ENCODE measurements at regions of chr11 and their contacts with region 1.

Region 1: DNA sequence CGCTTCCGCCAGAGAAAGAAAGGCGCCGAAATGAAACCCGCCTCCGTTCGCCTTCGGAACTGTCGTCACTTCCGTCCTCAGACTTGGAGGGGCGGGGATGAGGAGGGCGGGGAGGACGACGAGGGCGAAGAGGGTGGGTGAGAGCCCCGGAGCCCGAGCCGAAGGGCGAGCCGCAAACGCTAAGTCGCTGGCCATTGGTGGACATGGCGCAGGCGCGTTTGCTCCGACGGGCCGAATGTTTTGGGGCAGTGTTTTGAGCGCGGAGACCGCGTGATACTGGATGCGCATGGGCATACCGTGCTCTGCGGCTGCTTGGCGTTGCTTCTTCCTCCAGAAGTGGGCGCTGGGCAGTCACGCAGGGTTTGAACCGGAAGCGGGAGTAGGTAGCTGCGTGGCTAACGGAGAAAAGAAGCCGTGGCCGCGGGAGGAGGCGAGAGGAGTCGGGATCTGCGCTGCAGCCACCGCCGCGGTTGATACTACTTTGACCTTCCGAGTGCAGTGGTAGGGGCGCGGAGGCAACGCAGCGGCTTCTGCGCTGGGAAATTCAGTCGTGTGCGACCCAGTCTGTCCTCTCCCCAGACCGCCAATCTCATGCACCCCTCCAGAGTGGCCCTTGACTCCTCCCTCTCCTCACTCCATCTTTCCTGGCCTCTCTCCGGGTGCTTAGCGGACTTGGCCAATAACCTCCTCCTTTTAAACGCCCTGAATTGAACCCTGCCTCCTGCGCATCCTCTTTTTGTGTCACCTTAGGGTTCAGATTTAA is at the start of gene ATM:
- DNase-seq: peak; percentile 98 to 99 (median 99)
- H3K4me3 ChIP-seq: peak within 1 kb of the TSS; percentile 97 to 99
- H3K4me3 Mint-ChIP-seq: no peak within 1 kb of the TSS
- H3K27ac ChIP-seq: peak within 1 kb of the TSS; percentile 97
- H3K27ac Mint-ChIP-seq: no peak within 1 kb of the TSS
- H3K4me1 ChIP-seq: peaks cover 57% of the 10 kb centered on the region
- H3K4me1 Mint-ChIP-seq: peaks cover 33 to 57% (median 47%) of the 10 kb centered on the region in 4 donors
- H3K27me3 ChIP-seq: no peaks in the 10 kb centered on the region
- H3K27me3 Mint-ChIP-seq: no peaks in the 10 kb centered on the region
- total RNA-seq, gene ATM: 525 to 555 TPM

Region 2: DNA sequence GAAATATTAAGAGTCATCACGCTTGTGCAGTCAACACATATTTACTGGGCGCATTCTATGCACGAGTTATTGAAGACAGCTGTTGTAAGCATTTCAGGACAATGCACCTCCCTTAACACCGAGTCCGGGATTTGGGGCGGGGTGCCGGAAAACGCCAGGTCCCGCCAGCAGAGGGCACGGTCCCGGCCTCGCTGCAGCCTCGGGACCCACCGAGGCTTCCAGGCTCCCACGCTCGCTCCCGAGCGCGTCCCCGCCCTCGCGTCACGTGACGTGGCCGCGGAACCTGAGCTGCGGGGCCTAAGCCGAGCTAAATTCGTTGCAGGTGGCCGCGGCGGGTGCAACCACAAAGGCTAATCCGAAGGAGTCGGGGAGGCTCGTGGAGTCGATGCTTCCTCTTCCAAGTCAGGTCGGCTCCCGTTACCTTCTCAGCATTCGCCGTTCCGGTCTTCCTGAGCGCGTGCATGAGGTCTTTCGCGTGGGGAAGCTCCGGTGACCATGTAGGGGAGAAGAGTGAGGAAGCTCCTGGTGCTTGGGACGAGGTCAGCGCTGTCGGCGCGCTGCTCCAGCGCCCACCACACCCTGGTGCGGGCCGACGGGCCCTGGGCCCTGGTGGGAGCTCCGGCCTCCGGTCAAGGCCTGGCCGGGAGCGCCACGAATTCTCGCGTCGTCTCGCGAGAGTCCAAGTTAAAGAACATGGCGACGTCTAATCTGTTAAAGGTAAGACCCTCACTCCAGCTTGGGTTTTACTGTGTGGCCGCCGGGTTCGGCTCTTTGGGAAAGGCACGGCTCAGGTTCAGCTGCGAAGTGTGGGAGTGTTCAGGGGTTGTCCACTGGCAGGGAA is 214.0 kb before region 1 on chr11 and contains the start of gene CUL5:
- CTCF ChIA-PET with region 1: no interaction called
- POLR2A ChIA-PET with region 1: interaction called, 3 read pairs
- intact Hi-C with region 1: loop called (anchors 5 kb)
- DNase-seq: peak; percentile 87 to 91 (median 89)
- H3K4me3 ChIP-seq: peak within 1 kb of the TSS; percentile 98 to 100
- H3K4me3 Mint-ChIP-seq: peak within 1 kb of the TSS; percentile 94 to 100 (median 99)
- H3K27ac ChIP-seq: peak within 1 kb of the TSS; percentile 96
- H3K27ac Mint-ChIP-seq: peak within 1 kb of the TSS; percentile 92 to 98 (median 97)
- H3K4me1 ChIP-seq: peaks cover 48% of the 10 kb centered on the region
- H3K4me1 Mint-ChIP-seq: peaks cover 0 to 18% (median 14%) of the 10 kb centered on the region in 4 donors
- H3K27me3 ChIP-seq: no peaks in the 10 kb centered on the region
- H3K27me3 Mint-ChIP-seq: no peaks in the 10 kb centered on the region
- total RNA-seq, gene CUL5: 37.3 to 38.9 TPM

Region 3: DNA sequence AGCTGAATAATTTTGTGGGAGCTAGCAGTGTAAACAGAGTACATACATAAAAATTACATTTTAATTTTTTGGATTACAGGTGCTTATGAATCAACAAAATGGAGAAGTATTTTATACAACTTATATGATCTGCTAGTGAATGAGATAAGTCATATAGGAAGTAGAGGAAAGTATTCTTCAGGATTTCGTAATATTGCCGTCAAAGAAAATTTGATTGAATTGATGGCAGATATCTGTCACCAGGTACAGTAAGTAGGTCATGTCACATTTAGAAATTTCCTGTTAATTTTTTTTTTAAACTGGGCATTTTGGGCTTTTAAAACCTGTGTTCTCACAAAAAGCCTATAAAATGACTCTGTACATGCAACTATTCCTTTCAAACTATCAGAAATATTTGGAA is 24.0 kb after region 1 on chr11:
- CTCF ChIA-PET with region 1: interaction called, 132 read pairs
- POLR2A ChIA-PET with region 1: interaction called, 666 read pairs
- intact Hi-C with region 1: loop called (anchors 2 kb)
- DNase-seq: no peak
- H3K4me3 ChIP-seq: no peak overlapping the region
- H3K4me3 Mint-ChIP-seq: peak overlapping the region in 5 of 8 donors; percentile 35 to 46 (median 37)
- H3K27ac ChIP-seq: peak overlapping the region; percentile 35
- H3K27ac Mint-ChIP-seq: peak overlapping the region; percentile 54 to 92 (median 72)
- H3K4me1 ChIP-seq: peaks cover 75% of the 10 kb centered on the region
- H3K4me1 Mint-ChIP-seq: peaks cover 44 to 69% (median 52%) of the 10 kb centered on the region in 4 donors
- H3K27me3 ChIP-seq: no peaks in the 10 kb centered on the region
- H3K27me3 Mint-ChIP-seq: no peaks in the 10 kb centered on the region

Region 4: DNA sequence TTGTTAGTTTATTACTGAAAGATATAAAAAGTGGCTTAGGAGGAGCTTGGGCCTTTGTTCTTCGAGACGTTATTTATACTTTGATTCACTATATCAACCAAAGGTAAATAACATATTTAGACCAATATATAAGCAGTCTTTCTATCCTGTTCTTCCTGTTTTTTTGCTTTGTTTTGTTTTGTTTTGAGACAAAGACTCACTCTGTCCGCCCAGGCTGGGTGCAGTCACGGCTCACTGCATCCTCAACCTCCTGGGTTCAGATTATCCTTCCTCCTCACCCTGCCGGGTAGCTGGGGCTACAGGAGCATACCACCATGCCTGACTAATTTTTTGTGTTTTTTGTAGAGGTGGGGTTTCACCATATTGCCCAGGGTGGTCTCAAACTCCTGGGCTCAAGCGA is 66.8 kb after region 1 on chr11:
- CTCF ChIA-PET with region 1: interaction called, 4 read pairs
- POLR2A ChIA-PET with region 1: interaction called, 33 read pairs
- intact Hi-C with region 1: no loop called
- DNase-seq: no peak
- H3K4me3 ChIP-seq: no peak overlapping the region
- H3K4me3 Mint-ChIP-seq: no peak overlapping the region
- H3K27ac ChIP-seq: no peak overlapping the region
- H3K27ac Mint-ChIP-seq: peak overlapping the region in 2 of 7 donors; percentile 35 to 78
- H3K4me1 ChIP-seq: no peaks in the 10 kb centered on the region
- H3K4me1 Mint-ChIP-seq: peaks cover 2 to 7% (median 4%) of the 10 kb centered on the region in 4 donors
- H3K27me3 ChIP-seq: no peaks in the 10 kb centered on the region
- H3K27me3 Mint-ChIP-seq: no peaks in the 10 kb centered on the region

Region 5: GRCh38 chr11:108497317-108498045 is 274.6 kb after region 1 on chr11:
- CTCF ChIA-PET with region 1: no interaction called
- POLR2A ChIA-PET with region 1: no interaction called
- intact Hi-C with region 1: loop called (anchors 10 kb)
- DNase-seq: peak; percentile 73 to 88 (median 77)
- H3K4me3 ChIP-seq: peak overlapping the region; percentile 54 to 77
- H3K4me3 Mint-ChIP-seq: peak overlapping the region; percentile 97 to 100 (median 100)
- H3K27ac ChIP-seq: peak overlapping the region; percentile 90
- H3K27ac Mint-ChIP-seq: peak overlapping the region; percentile 93 to 100 (median 100)
- H3K4me1 ChIP-seq: peaks cover 11% of the 10 kb centered on the region
- H3K4me1 Mint-ChIP-seq: peaks cover 19 to 32% (median 28%) of the 10 kb centered on the region in 4 donors
- H3K27me3 ChIP-seq: no peaks in the 10 kb centered on the region
- H3K27me3 Mint-ChIP-seq: no peaks in the 10 kb centered on the region